ENCODE measurements at regions of chr5 and their contacts with region 1.

Region 1: GRCh38 chr5:73792687-73793320 is 166.8 kb downstream of the ARHGEF28 start:
- DNase-seq: peak; percentile 77
- H3K4me3 ChIP-seq: no peak overlapping the region
- H3K27ac ChIP-seq: no peak overlapping the region
- H3K4me1 ChIP-seq: no peaks in the 10 kb centered on the region
- H3K27me3 ChIP-seq: no peaks in the 10 kb centered on the region
- CTCF ChIP-seq: peak; percentile 96

Region 2: GRCh38 chr5:73591102-73591695 is 201.6 kb before region 1 on chr5:
- intact Hi-C with region 1: loop called (anchors 2 kb)
- DNase-seq: peak; percentile 75
- H3K4me3 ChIP-seq: no peak overlapping the region
- H3K27ac ChIP-seq: no peak overlapping the region
- H3K4me1 ChIP-seq: no peaks in the 10 kb centered on the region
- H3K27me3 ChIP-seq: no peaks in the 10 kb centered on the region
- CTCF ChIP-seq: peak; percentile 88

Measured in colonic mucosa (tissue), 4 donors.